Calu3 (cell line): ENCODE measurements at regions of chr5 and their contacts with region 1.

Region 1: DNA sequence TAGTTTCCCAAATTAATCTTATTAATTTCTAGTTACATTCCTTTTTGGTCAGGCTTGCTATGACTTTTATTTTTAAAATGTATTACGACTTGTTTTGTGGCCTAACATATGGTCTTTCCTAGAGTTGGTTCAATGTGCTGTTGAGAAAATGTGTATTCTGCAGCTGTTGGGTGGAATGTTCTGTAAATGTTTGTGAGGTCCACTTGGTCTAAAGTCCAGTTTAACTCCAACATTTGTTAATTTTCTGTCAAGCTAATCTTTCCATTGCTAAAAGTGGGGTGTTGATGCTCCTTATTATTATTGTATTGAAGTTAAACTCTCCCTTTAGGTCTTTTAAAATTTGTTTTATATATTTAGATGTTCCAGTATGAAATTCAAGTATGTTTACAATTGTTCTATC is 1010.8 kb upstream of the EDIL3 start:
- DNase-seq: no peak
- H3K4me3 Mint-ChIP-seq: no peak overlapping the region
- H3K27ac Mint-ChIP-seq: no peak overlapping the region
- H3K4me1 Mint-ChIP-seq: no peaks in the 10 kb centered on the region
- H3K27me3 Mint-ChIP-seq: no peaks in the 10 kb centered on the region
- CTCF ChIP-seq: no peak

Region 2: DNA sequence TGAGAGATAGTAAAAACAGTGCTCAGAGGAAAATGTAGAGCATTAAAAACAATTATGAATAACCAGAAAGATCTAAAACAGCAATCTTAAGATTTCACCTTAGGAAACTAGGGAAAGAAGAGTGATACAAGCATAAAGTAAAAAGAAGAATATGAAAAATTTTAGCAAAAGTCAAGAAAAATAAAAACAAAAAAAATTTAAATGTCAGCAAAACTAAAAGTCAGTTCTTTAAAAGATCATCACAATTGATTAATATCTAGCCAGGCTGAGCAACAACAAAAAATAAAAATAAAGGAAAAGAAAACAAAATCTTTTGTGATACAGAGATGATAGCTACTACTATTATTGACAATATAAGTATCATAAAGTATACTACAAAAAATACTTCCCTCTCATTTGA is 77.2 kb after region 1 on chr5:
- CTCF ChIA-PET with region 1: no interaction called
- intact Hi-C with region 1: loop called (anchors 5 kb)
- DNase-seq: no peak
- H3K4me3 Mint-ChIP-seq: no peak overlapping the region
- H3K27ac Mint-ChIP-seq: no peak overlapping the region
- H3K4me1 Mint-ChIP-seq: no peaks in the 10 kb centered on the region
- H3K27me3 Mint-ChIP-seq: no peaks in the 10 kb centered on the region
- CTCF ChIP-seq: no peak

Region 3: DNA sequence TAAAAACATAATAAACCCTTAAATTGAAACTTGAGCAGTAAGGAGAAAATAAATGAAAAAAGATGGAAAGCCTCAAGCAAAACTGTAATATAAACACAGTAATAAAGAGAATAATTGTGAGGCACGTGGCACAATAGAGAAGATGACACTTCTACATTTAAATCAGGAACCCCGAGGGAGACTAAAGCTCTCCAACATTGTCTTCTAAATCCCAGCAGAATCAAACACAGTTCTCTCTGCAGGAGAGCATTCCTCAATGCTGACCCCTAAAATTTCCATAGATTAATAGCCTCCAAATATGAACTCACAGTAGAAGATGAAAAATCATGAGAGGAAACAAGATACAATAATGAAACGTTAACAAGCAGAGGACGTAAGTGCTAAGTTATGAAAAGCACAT is 501.0 kb after region 1 on chr5:
- CTCF ChIA-PET with region 1: no interaction called
- intact Hi-C with region 1: no loop called
- DNase-seq: no peak
- H3K4me3 Mint-ChIP-seq: no peak overlapping the region
- H3K27ac Mint-ChIP-seq: no peak overlapping the region
- H3K4me1 Mint-ChIP-seq: no peaks in the 10 kb centered on the region
- H3K27me3 Mint-ChIP-seq: no peaks in the 10 kb centered on the region
- CTCF ChIP-seq: no peak